ENCODE measurements at regions of chr1 and their contacts with region 1.

Region 1: DNA sequence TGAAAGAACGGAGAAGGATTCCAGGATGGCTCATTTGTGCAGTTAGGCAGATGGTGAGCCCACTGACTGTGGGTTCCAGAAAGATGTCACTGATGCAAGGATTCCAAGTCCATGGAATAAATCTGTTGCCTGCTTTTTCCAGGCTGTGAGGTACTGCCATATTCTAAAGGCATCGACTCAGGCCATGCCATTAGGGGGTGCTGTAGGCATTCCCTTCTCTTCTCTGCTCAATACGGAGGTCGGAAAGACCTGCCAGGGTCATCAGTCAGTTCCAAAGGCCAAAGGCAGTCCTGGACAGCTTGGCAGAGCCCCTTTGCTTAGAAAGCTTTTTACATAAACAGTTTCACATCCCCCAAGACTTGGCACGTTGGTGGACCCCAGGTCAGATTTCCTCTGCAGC is 31.7 kb upstream of the TMEM125 start:
- DNase-seq: peak; percentile 81
- ATAC-seq: peak; percentile 95
- H3K4me3 ChIP-seq: no peak overlapping the region
- H3K27ac ChIP-seq: no peak overlapping the region
- H3K4me1 ChIP-seq: peaks cover 6% of the 10 kb centered on the region; the same call in 1 of the 2 replicates
- H3K27me3 ChIP-seq: peaks cover 1 to 27% of the 10 kb centered on the region in 2 experiments; a peak in 4 of 5 replicates
- CTCF ChIP-seq: peak; percentile 97
- EP300 ChIP-seq: no peak
- POLR2A ChIP-seq: no peak
- RAD21 ChIP-seq: peak; percentile 96

Region 2: DNA sequence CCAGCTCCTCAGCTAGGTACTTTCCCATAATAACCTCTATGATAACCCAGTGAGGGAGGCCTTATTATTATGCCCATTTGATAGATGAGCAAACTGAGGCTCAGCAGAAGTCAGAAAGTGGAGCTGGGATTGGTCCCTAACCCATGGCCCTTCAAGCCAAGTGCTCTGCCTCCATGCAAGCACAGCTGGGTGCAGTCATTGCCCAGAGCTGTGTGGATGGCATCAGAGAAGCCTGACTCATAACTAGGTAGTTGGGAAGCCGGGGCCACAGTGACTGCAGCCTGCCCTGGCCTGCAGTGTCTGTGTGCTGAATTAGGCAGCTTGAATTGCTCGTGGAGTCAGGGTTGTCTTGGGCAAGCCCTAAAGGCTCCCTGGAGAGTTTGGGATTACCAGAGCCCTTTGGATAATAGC is 189.5 kb before region 1 on chr1:
- CTCF ChIA-PET with region 1: no interaction called
- POLR2A ChIA-PET with region 1: no interaction called
- in situ Hi-C with region 1: no loop called
- intact Hi-C with region 1: no loop called
- DNase-seq: no peak
- ATAC-seq: no peak
- H3K4me3 ChIP-seq: no peak overlapping the region
- H3K27ac ChIP-seq: no peak overlapping the region
- H3K4me1 ChIP-seq: peaks cover 72% of the 10 kb centered on the region
- H3K27me3 ChIP-seq: no peaks in the 10 kb centered on the region
- CTCF ChIP-seq: no peak
- EP300 ChIP-seq: no peak
- POLR2A ChIP-seq: no peak
- RAD21 ChIP-seq: no peak

Region 3: GRCh38 chr1:43358746-43359693 is 120.9 kb after region 1 on chr1 and contains the start of gene CDC20:
- CTCF ChIA-PET with region 1: interaction called, 9 read pairs
- POLR2A ChIA-PET with region 1: no interaction called
- in situ Hi-C with region 1: no loop called
- intact Hi-C with region 1: loop called (anchors 1 kb)
- DNase-seq: peak; percentile 97
- ATAC-seq: peak; percentile 96
- H3K4me3 ChIP-seq: peak within 1 kb of the TSS; percentile 92 to 97 (median 97)
- H3K27ac ChIP-seq: peak within 1 kb of the TSS; percentile 76
- H3K4me1 ChIP-seq: peaks cover 63% of the 10 kb centered on the region
- H3K27me3 ChIP-seq: no peaks in the 10 kb centered on the region; a peak in 1 of 5 replicates
- CTCF ChIP-seq: no peak
- EP300 ChIP-seq: no peak
- POLR2A ChIP-seq: peak; percentile 82 to 87
- RAD21 ChIP-seq: no peak
- total RNA-seq, gene CDC20: 90.0 and 97.8 TPM in 2 replicates

Region 4: DNA sequence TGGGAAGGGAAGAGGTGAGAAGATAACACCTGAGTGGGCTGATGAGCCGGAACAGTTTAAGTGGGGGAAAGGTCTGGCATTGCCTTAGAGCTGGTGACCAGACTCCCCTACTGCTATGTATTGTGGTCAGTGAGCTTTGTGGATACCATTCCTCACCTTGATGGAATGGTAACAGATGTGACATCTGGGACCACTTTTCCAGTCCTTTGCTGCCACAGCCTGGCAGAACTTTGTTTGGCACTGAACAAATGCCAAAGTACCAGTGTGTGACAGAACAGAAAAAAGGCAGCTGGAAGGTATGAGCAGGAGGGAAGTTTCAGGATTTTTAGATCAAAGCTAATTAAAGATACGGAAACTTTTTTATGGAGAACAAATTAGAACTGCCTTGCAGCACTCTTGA is 145.4 kb after region 1 on chr1:
- CTCF ChIA-PET with region 1: interaction called, 5 read pairs
- POLR2A ChIA-PET with region 1: interaction called, 4 read pairs
- in situ Hi-C with region 1: no loop called
- intact Hi-C with region 1: loop called (anchors 1 kb)
- DNase-seq: no peak
- ATAC-seq: no peak
- H3K4me3 ChIP-seq: no peak overlapping the region
- H3K27ac ChIP-seq: no peak overlapping the region
- H3K4me1 ChIP-seq: peaks cover 27% of the 10 kb centered on the region
- H3K27me3 ChIP-seq: no peaks in the 10 kb centered on the region
- CTCF ChIP-seq: peak; percentile 52
- EP300 ChIP-seq: no peak
- POLR2A ChIP-seq: no peak
- RAD21 ChIP-seq: no peak

Region 5: DNA sequence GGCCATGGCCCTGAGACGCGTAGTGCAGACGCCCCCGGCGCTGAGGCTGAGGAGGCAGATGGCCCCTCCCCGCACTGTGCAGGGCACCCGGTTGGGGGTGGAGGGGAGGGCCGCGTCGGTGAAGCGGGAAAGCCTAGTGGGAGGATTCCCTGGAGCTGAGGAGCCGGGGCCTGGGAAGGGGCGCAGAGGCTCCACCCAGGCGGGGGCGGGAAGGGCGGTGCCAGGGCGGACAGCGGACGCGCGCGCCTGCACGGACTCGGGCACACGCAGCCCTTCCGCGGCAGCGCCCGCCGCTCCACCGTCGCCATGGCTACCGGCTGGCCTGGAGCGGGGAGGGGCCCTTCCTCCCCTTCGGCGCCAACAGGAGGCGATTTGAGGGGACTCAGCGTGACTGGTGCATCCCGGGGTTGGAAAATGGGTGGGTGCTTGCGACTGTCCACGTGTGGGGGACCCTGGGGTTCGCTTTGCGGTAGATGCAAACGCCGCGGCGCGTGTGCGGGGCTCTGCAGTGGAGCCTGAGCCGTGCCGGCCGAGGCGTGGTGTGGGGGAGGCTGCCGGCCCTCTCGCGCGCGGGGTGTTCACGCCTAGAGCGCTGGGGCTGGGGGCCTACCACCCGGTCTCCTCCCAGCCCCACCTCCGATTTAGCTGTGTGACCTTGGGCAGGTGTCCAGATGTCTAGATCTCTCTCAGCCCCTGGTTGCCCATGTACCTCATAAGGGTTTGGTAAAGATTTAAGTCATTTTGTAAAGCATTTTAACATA is 327.7 kb after region 1 on chr1:
- CTCF ChIA-PET with region 1: no interaction called
- POLR2A ChIA-PET with region 1: no interaction called
- in situ Hi-C with region 1: no loop called
- intact Hi-C with region 1: no loop called
- DNase-seq: no peak
- ATAC-seq: no peak
- H3K4me3 ChIP-seq: no peak overlapping the region
- H3K27ac ChIP-seq: no peak overlapping the region
- H3K4me1 ChIP-seq: peaks cover 7% of the 10 kb centered on the region; the same call in 1 of the 2 replicates
- H3K27me3 ChIP-seq: no peaks in the 10 kb centered on the region
- CTCF ChIP-seq: no peak
- EP300 ChIP-seq: no peak
- POLR2A ChIP-seq: no peak
- RAD21 ChIP-seq: no peak

Measured in HepG2 (cell line).